Heart right ventricle (tissue), 16 donors: ENCODE measurements at regions of chr16 and their contacts with region 1.

Region 1: GRCh38 chr16:25257504-25257955 is at the start of gene ZKSCAN2:
- DNase-seq: peak; percentile 90 to 91
- ATAC-seq: peak; percentile 96 to 98 (median 98)
- H3K4me3 ChIP-seq: peak within 1 kb of the TSS; percentile 26 to 93 (median 84)
- H3K27ac ChIP-seq: peak within 1 kb of the TSS; percentile 92 to 100 (median 99)
- H3K4me1 ChIP-seq: peaks cover 4 to 45% (median 36%) of the 10 kb centered on the region in 9 donors
- H3K27me3 ChIP-seq: no peaks in the 10 kb centered on the region
- CTCF ChIP-seq: no peak
- total RNA-seq, gene ZKSCAN2: 4.3 to 8.7 (median 6.0) TPM

Region 2: GRCh38 chr16:23435500-23435899 is 1822.0 kb before region 1 on chr16:
- intact Hi-C with region 1: no loop called
- DNase-seq: peak; percentile 28 to 41
- ATAC-seq: peak; percentile 55 to 77 (median 69)
- H3K4me3 ChIP-seq: no peak overlapping the region
- H3K27ac ChIP-seq: peak overlapping the region in 1 of 10 donors; percentile 27
- H3K4me1 ChIP-seq: peaks cover 0 to 16% (median 0%) of the 10 kb centered on the region in 9 donors
- H3K27me3 ChIP-seq: no peaks in the 10 kb centered on the region
- CTCF ChIP-seq: peak; percentile 61 to 87 (median 76)

Region 3: GRCh38 chr16:24539291-24539849 is 718.2 kb before region 1 on chr16 and contains the start of gene RBBP6:
- intact Hi-C with region 1: loop called in 1 of 10 experiments (anchors 10 kb)
- DNase-seq: peak; percentile 93 to 95
- ATAC-seq: peak; percentile 95 to 98 (median 97)
- H3K4me3 ChIP-seq: peak within 1 kb of the TSS; percentile 61 to 97 (median 82)
- H3K27ac ChIP-seq: peak within 1 kb of the TSS; percentile 95 to 100 (median 100)
- H3K4me1 ChIP-seq: peaks cover 3 to 35% (median 29%) of the 10 kb centered on the region in 9 donors
- H3K27me3 ChIP-seq: no peaks in the 10 kb centered on the region
- CTCF ChIP-seq: peak; percentile 7 to 57 (median 39)
- total RNA-seq, gene RBBP6: 26.8 to 50.3 (median 33.1) TPM